H1 (cell line): ENCODE measurements at regions of chr19 and their contacts with region 1.

Region 1: DNA sequence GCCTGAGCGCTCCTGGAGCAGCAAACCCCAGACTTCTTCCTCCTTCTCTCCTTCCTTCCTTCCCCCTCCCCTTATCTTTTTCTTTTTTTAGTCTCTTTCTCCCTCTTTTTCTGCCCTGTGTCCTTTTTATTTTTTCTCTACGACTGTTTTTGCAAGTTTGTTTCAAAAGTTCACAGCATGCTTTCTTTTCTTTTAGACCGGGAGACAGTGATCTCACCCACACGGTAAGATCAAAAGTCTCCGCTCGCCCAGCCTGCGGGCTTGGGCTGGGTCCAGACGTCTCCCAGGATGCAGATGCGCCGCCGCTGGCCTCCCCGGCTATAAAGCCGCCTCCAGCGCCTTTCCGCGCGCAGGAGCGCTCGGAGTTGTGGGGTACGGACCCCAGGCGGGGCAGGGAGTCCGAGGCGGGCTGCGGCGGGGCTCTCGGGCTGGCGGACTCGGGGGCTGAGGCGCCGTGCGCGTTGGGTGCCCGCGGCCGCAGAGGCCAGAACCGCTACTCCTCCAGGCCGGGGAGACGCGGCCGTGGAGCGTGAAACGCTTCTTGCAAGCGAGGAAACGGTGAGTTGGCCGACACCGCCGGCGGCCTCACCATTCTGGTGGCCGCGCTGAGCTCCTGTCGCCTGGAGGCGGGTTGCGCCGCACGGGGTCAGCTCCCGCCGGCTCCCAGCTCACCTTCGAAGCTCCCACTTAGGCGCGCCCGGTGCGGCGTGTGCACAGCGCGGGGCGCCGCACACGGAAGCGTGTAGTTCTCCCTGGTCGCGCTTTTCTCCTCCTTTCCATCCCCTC is 2.0 kb upstream of the TSHZ3 start:
- DNase-seq: peak in 1 of 2 experiments; percentile 66
- H3K4me3 ChIP-seq: peak overlapping the region; percentile 57 to 82 (median 70)
- H3K27ac ChIP-seq: no peak overlapping the region
- H3K4me1 ChIP-seq: peaks cover 15 to 36% (median 23%) of the 10 kb centered on the region in 4 experiments
- H3K27me3 ChIP-seq: peaks cover 38 to 75% (median 61%) of the 10 kb centered on the region in 4 experiments; a peak in 6 of 7 replicates
- CTCF ChIP-seq: no peak
- EP300 ChIP-seq: no peak
- POLR2A ChIP-seq: no peak
- RAD21 ChIP-seq: no peak

Region 2: DNA sequence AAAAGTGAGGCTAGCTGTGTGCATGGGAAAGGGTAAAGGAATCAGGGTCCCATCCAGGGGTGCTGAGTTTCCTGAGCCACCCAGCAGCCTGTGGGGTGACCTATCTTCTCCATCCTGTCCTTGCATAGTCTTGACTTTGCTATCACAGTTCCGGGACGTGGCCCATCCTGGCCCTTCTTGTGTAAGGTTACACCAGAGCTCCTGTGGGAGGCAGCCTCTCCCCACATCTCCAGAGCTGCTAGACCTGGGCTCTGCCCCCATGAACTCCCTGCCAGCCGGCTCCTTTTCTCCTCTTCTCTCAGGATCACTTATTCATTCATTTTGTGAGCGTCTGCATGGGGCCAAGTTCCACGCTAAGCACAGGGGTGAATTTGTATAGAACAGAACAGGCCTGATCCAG is 240.9 kb before region 1 on chr19:
- CTCF ChIA-PET with region 1: interaction called, 13 read pairs
- POLR2A ChIA-PET with region 1: no interaction called
- DNase-seq: peak; percentile 9 to 48
- H3K4me3 ChIP-seq: no peak overlapping the region
- H3K27ac ChIP-seq: no peak overlapping the region
- H3K4me1 ChIP-seq: peaks cover 0 to 6% (median 2%) of the 10 kb centered on the region in 4 experiments; a peak in 2 of 7 replicates
- H3K27me3 ChIP-seq: no peaks in the 10 kb centered on the region
- CTCF ChIP-seq: peak; percentile 45 to 55 (median 54)
- EP300 ChIP-seq: no peak
- POLR2A ChIP-seq: no peak
- RAD21 ChIP-seq: peak; percentile 72 to 87